AG04450 (cell line): ENCODE measurements at regions of chr2 and their contacts with region 1.

Region 1: GRCh38 chr2:100381240-100381639 is 36.2 kb downstream of the CHST10 start:
- DNase-seq: peak; percentile 48
- H3K4me3 ChIP-seq: no peak overlapping the region
- H3K27ac ChIP-seq: no peak overlapping the region
- H3K27me3 ChIP-seq: peaks cover 17% of the 10 kb centered on the region
- CTCF ChIP-seq: peak; percentile 94

Region 2: DNA sequence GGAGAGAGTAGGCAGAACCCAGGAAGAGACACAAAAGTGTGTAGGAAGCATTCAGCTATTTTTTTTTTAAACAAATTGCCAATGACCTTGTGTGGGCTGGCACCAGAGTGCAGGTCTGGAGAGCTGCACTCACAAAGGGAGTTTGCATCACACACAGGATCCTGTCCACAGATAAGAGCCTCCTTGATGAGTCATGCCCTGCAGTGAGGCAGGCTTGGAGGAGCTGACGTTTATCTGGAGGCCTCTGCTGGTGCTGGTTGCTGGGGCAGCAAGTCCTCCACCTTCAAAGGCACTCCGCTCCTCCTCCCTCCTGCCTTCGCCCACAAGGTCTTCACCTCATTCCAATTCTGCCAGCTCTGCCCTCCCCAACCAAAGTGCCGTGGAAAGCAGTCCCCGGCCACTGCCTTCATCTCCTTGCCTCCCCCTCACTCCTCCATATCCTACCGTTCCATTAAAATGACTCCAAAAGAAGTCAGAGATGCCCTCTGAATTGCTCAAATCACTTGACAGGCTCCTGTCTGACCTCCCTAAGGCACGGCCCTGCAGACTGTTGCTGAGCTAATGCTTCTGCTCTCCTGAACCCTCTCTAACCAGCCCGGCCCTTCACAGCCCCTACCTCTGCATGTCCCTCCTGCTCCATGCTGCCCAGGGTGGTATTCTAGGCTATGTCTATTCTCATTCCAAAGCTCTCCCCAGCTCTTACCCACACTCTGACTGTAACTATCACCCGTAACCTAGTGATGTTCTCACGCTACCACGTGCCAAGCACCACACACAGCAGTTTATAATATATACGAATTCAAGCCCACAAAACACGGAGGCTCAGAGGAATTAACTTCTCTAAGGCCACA is 89.9 kb before region 1 on chr2:
- CTCF ChIA-PET with region 1: interaction called, 24 read pairs
- POLR2A ChIA-PET with region 1: no interaction called
- DNase-seq: peak; percentile 92
- H3K4me3 ChIP-seq: no peak overlapping the region
- H3K27ac ChIP-seq: peak overlapping the region; percentile 96
- H3K27me3 ChIP-seq: no peaks in the 10 kb centered on the region
- CTCF ChIP-seq: no peak

Region 3: GRCh38 chr2:100334929-100335328 is 46.3 kb before region 1 on chr2:
- CTCF ChIA-PET with region 1: interaction called, 14 read pairs
- POLR2A ChIA-PET with region 1: no interaction called
- DNase-seq: no peak
- H3K4me3 ChIP-seq: no peak overlapping the region
- H3K27ac ChIP-seq: no peak overlapping the region
- H3K27me3 ChIP-seq: peaks cover 23% of the 10 kb centered on the region
- CTCF ChIP-seq: no peak

Region 4: GRCh38 chr2:100350707-100351106 is 30.5 kb before region 1 on chr2:
- CTCF ChIA-PET with region 1: interaction called, 12 read pairs
- POLR2A ChIA-PET with region 1: no interaction called
- DNase-seq: no peak
- H3K4me3 ChIP-seq: no peak overlapping the region
- H3K27ac ChIP-seq: no peak overlapping the region
- H3K27me3 ChIP-seq: peaks cover 26% of the 10 kb centered on the region
- CTCF ChIP-seq: no peak

Region 5: DNA sequence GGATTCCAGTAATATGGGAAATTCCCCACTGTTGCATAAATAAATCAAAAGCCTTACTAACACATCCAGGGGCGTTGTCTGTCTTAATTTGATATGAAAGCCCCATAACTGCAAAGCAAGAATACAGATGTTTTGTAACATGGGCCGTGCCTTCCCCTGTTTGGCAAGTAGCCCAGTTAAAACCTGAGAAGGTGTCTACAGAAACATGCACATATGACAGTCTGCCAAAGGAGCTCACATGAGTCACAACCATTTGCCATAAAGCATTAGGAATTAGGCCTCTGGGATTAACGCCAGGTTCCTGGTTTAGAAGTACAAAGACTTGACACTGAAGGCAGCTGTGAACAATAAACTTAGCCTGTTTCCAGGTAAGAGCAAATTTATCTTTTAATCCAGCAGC is 15.8 kb before region 1 on chr2:
- CTCF ChIA-PET with region 1: interaction called, 52 read pairs
- POLR2A ChIA-PET with region 1: no interaction called
- DNase-seq: peak; percentile 87
- H3K4me3 ChIP-seq: no peak overlapping the region
- H3K27ac ChIP-seq: no peak overlapping the region
- H3K27me3 ChIP-seq: peaks cover 11% of the 10 kb centered on the region
- CTCF ChIP-seq: no peak

Region 6: DNA sequence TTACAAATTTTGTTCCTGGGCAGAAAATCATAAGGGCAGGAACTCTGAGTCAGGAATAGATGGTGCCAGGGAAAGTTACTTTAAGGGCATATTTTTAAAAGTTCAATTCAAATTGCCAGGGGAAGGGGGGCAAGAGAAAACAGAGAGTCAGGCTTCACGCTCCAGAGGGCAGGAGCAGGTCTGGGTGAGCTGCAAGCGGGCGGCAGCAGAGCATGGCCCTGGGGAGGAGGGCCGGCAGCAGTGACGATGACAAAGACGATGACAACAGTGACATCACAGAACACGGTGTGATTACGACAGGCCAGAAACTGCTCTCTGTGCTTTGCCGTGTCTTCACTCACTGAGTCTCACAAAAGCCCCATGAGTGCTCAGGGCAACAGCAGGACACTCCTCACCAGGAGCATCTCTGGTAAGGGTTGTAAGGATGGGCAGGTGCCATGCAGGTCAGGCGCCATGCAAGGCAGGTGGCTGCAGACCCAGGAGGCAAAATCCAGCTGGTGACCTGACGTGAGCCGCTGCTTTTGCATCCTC is 12.9 kb after region 1 on chr2:
- CTCF ChIA-PET with region 1: interaction called, 31 read pairs
- POLR2A ChIA-PET with region 1: interaction called, 3 read pairs
- DNase-seq: no peak
- H3K4me3 ChIP-seq: no peak overlapping the region
- H3K27ac ChIP-seq: no peak overlapping the region
- H3K27me3 ChIP-seq: no peaks in the 10 kb centered on the region
- CTCF ChIP-seq: no peak

Region 7: DNA sequence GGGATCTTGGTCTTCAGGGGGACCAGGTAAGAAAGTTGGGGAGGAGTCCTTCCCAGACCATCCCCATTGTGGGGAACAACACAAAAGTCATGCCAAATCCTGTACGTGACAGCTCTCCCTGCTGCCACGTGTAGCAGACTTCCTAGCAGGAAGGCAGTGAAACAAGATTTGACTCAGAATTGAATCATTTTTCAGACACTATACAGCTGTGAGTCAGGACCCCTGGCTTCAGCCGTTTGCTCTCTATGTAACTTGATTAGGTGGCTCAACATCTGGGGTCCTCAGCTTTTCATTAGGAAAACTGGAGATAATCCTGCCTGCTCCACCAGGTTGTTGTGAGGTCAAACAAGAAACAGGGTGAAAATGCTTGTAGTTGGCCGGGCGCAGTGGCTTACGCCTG is 148.7 kb after region 1 on chr2:
- CTCF ChIA-PET with region 1: no interaction called
- POLR2A ChIA-PET with region 1: no interaction called
- DNase-seq: no peak
- H3K4me3 ChIP-seq: no peak overlapping the region
- H3K27ac ChIP-seq: no peak overlapping the region
- H3K27me3 ChIP-seq: peaks cover 2% of the 10 kb centered on the region
- CTCF ChIP-seq: no peak

Region 8: GRCh38 chr2:100721693-100722092 is 340.5 kb after region 1 on chr2:
- CTCF ChIA-PET with region 1: no interaction called
- POLR2A ChIA-PET with region 1: no interaction called
- DNase-seq: no peak
- H3K4me3 ChIP-seq: no peak overlapping the region
- H3K27ac ChIP-seq: no peak overlapping the region
- H3K27me3 ChIP-seq: peaks cover 37% of the 10 kb centered on the region
- CTCF ChIP-seq: no peak